SK-N-SH (cell line): ENCODE measurements at regions of chr17 and their contacts with region 1.

Region 1: DNA sequence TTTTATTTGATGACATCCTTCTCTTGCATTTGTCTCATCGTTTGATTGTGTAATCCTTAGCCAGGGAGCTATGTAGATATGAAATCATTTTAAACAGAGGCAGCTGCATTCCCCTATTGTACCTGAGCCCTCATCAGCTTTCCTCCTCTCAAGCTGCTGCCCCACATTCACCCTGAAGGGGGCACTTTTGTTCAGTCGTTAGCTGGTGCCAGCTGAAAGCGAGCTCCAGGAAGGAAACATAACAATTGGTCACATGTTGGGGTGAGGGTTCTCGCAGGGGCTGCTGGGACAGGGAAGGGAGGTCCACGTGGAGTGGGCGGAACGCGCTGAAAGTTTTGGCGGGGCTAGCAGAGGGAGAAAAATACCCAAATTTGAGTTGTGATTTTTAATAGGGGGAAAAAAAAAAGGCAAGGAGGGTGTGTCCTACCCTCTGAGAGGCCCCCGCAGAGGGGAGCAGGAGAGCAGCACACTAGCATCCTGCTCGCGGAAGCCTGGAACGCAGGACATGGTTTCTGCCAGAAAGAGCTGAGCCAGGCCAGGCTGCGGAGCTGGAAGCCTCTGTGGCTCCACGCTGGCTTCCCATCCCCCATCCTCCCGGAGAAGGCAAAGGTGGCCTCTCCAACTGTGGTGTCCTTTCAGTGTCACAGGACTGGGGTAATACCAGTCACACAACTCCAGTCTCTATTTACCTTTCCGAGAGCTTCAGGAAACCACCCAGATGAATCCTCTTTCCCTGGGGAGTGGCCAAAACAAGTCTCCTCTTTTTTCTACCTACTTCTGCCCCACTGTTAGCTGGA is 8.5 kb upstream of the MSL1 start:
- DNase-seq: peak; percentile 90
- H3K4me3 ChIP-seq: peak overlapping the region; percentile 44 to 48
- H3K27ac ChIP-seq: peak overlapping the region; percentile 82 to 86
- H3K4me1 ChIP-seq: peaks cover 37 to 41% of the 10 kb centered on the region in 2 experiments
- H3K27me3 ChIP-seq: no peaks in the 10 kb centered on the region
- CTCF ChIP-seq: peak; percentile 84
- EP300 ChIP-seq: 0 out of 4 replicates have a peak, but pooled peaks of 1 of the 2 experiments have one; percentile 21
- RAD21 ChIP-seq: peak; percentile 88

Region 2: GRCh38 chr17:40021451-40021971 is 91.8 kb before region 1 on chr17:
- CTCF ChIA-PET with region 1: interaction called, 44 read pairs
- POLR2A ChIA-PET with region 1: no interaction called
- DNase-seq: no peak
- H3K4me3 ChIP-seq: no peak overlapping the region
- H3K27ac ChIP-seq: peak overlapping the region in 1 of 2 experiments; percentile 54; a peak in 2 of 4 replicates
- H3K4me1 ChIP-seq: peaks cover 0 to 9% of the 10 kb centered on the region in 2 experiments; a peak in 2 of 4 replicates
- H3K27me3 ChIP-seq: no peaks in the 10 kb centered on the region
- CTCF ChIP-seq: no peak
- EP300 ChIP-seq: no peak
- RAD21 ChIP-seq: no peak

Region 3: DNA sequence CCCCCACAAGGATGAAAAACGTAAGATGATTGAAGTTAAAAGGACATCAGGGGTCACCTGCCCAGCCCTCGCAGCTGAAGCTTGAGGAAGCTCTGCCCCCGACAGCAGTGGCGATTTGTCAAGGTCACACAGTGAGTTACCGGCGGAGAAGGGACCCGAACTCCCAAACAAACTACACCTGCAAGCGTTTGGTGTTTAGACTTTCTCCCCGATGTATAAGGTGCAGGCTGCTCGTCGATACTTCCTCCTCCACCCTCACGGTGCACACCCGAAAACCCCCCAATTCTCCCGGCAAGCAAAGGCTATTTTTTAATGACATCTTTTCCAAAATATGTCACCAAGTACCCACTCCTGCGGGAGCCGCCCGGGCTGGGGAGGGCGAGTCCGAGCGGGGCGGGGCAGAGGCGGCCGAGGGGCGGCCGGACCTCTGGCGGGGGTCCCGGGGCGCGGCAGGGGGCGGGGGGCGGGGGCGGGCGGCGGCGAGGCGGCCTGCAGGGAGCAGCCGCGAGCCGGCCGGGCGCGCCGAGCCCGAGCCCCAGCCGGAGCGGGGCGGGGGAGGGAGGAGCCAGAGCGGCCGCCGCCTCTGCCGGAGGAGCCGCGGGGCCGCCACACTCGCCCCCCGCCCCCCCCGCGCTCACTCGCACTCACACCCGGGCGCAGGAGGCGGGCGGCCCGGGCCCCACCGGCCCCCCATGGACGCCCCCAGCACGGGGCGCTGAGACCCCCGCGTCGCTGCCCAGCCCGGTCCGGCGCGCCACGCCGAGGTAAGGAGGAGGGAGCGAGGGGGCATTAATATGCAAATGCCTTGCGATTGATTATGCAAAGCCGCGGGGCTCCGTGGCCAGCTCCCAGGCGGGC is 50.8 kb before region 1 on chr17 and contains the start of gene THRA:
- CTCF ChIA-PET with region 1: interaction called, 34 read pairs
- POLR2A ChIA-PET with region 1: interaction called, 4 read pairs
- DNase-seq: peak; percentile 95
- H3K4me3 ChIP-seq: peak within 1 kb of the TSS; percentile 77 to 94
- H3K27ac ChIP-seq: peak within 1 kb of the TSS in 1 of 2 experiments; percentile 81; a peak in 2 of 4 replicates
- H3K4me1 ChIP-seq: peaks cover 13 to 32% of the 10 kb centered on the region in 2 experiments; a peak in 3 of 4 replicates
- H3K27me3 ChIP-seq: no peaks in the 10 kb centered on the region
- CTCF ChIP-seq: no peak
- EP300 ChIP-seq: no peak
- RAD21 ChIP-seq: peak; percentile 38; the same call in 1 of the 2 replicates
- polyA plus RNA-seq, gene THRA: 20.1 and 23.1 TPM in 2 replicates

Region 4: GRCh38 chr17:40098846-40099618 is 14.3 kb before region 1 on chr17:
- CTCF ChIA-PET with region 1: interaction called, 98 read pairs
- POLR2A ChIA-PET with region 1: interaction called, 25 read pairs
- DNase-seq: peak; percentile 97
- H3K4me3 ChIP-seq: peak overlapping the region; percentile 73 to 96
- H3K27ac ChIP-seq: peak overlapping the region; percentile 74 to 95
- H3K4me1 ChIP-seq: peaks cover 14 to 28% of the 10 kb centered on the region in 2 experiments; a peak in 1 of 4 replicates
- H3K27me3 ChIP-seq: no peaks in the 10 kb centered on the region
- CTCF ChIP-seq: no peak
- EP300 ChIP-seq: peak; percentile 16 to 81; a peak in 2 of 4 replicates
- RAD21 ChIP-seq: no peak

Region 5: DNA sequence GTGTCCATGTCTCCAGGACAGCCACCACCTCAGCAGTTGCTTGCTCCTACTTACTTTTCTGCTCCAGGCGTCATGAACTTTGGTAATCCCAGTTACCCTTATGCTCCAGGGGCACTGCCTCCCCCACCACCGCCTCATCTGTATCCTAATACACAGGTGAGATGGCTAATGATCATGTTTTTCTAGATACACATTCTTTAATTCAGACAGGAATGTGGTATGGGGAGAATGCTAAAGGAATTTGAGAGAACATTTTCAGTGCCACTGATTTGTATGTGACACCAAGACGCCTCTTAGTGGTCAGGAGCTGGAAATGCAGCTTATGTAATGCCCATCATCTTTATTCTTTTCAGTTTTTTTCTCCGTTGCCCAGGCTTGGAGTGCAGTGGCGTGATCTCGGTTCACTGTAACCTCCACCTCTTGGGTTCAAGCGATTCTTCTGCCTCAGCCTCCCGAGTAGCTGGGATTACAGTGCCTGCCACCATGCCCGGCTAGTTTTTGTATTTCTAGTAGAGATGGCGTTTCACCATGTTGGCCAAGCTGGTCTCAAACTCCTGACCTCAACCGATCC is 55.0 kb after region 1 on chr17:
- CTCF ChIA-PET with region 1: interaction called, 89 read pairs
- POLR2A ChIA-PET with region 1: interaction called, 6 read pairs
- DNase-seq: peak; percentile 65
- H3K4me3 ChIP-seq: peak overlapping the region in 1 of 2 experiments; percentile 36; a peak in 1 of 4 replicates
- H3K27ac ChIP-seq: peak overlapping the region; percentile 37; a peak in 2 of 4 replicates
- H3K4me1 ChIP-seq: peaks cover 0 to 3% of the 10 kb centered on the region in 2 experiments; a peak in 2 of 4 replicates
- H3K27me3 ChIP-seq: no peaks in the 10 kb centered on the region
- CTCF ChIP-seq: peak; percentile 83
- EP300 ChIP-seq: no peak
- RAD21 ChIP-seq: peak; percentile 75

Region 6: DNA sequence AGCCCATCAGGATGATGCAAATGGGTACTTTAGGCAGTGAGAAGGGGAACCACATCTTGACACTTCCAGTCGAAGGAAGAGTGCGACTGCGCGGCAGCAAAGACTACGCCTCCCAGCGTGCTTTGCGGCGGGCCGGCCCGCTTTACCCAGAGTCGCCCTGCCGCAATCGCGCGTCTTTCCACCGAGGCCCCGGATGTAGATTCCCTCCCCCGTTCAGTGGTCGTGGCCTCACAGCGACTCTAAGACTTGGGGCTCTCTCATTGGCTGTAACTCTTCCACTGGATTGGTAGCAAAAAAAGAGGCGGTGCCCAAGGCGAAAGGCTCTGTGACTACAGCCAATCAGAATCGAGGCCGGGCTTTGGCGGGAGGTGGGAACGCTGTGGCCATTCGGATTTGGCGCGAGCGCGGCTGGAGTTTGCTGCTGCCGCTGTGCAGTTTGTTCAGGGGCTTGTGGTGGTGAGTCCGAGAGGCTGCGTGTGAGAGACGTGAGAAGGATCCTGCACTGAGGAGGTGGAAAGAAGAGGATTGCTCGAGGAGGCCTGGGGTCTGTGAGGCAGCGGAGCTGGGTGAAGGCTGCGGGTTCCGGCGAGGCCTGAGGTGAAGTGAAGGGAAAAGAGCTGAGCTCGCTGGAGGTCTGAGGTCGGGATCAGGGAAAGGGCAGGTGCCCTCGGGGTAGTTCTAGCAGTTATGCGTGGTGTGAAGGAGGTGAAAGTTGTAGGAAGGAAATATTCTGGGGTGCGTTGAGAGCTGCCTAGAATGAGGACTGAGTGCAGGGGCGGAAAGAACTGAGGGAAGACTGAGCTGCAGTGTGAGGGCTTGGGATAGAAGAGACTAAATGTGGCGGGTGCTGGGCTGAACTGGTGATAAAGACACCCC is 174.4 kb after region 1 on chr17 and contains the start of gene CDC6:
- CTCF ChIA-PET with region 1: interaction called, 11 read pairs
- POLR2A ChIA-PET with region 1: no interaction called
- DNase-seq: peak; percentile 93
- H3K4me3 ChIP-seq: peak within 1 kb of the TSS; percentile 66 to 72
- H3K27ac ChIP-seq: peak within 1 kb of the TSS; percentile 56 to 75
- H3K4me1 ChIP-seq: peaks cover 7 to 11% of the 10 kb centered on the region in 2 experiments; a peak in 3 of 4 replicates
- H3K27me3 ChIP-seq: no peaks in the 10 kb centered on the region
- CTCF ChIP-seq: no peak
- EP300 ChIP-seq: no peak
- RAD21 ChIP-seq: no peak
- polyA plus RNA-seq, gene CDC6: 12.7 and 12.8 TPM in 2 replicates